ENCODE measurements at regions of chr2 and their contacts with region 1.

Region 1: DNA sequence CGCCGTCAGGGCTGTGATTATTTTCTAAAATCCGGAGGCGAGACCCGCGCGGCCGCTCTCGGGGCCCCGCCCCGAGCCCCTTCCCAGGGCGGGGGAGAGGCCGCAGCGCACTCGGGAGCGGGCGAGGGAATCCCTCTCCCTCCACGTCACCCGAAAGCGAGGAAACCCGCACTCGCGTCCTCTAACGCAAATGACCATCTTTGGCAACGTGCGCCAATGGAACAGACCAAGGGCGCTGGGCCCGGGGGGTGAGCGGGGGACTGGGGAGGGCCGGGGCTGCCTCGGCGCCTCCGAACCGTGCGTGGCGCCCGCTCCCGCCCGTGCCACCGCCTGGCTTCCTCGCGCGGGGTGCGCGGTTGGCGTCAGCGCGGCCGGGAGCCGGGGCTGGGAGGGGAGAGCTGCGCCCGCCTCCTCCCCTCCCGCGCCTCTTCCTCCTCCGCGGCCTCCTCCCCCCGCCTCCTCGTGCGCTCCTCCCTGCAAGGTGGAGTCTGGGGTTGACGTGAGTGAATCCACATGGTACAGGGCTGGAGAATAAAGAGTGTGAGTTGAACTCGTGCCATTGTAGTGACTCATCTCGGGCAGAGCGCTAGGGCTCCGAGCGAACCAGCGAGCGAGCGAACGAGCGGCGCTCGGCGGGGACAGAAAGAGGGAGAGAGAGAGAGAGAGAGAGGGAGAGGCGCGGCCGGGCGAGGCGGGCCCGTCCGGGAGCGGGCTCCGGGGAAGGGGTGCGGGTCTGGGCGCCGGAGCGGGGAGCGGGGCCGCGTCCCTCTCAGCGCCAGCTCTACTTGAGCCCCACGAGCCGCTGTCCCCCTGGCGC is at the start of gene FOSL2:
- DNase-seq: peak; percentile 95
- H3K4me3 Mint-ChIP-seq: peak within 1 kb of the TSS; percentile 91
- H3K27ac Mint-ChIP-seq: peak within 1 kb of the TSS; percentile 99
- H3K4me1 Mint-ChIP-seq: peaks cover 27% of the 10 kb centered on the region
- H3K27me3 Mint-ChIP-seq: no peaks in the 10 kb centered on the region
- total RNA-seq, gene FOSL2: 96.4 to 100 TPM

Region 2: GRCh38 chr2:27628767-27629709 is 763.5 kb before region 1 on chr2 and contains the starts of genes CCDC121 and GPN1:
- CTCF ChIA-PET with region 1: no interaction called
- POLR2A ChIA-PET with region 1: no interaction called
- DNase-seq: peak; percentile 98
- H3K4me3 Mint-ChIP-seq: no peak within 1 kb of the TSS
- H3K27ac Mint-ChIP-seq: no peak within 1 kb of the TSS
- H3K4me1 Mint-ChIP-seq: peaks cover 16% of the 10 kb centered on the region
- H3K27me3 Mint-ChIP-seq: no peaks in the 10 kb centered on the region
- total RNA-seq, gene CCDC121: 0.78 to 0.90 TPM
- total RNA-seq, gene GPN1: 45.0 to 45.8 TPM

Region 3: GRCh38 chr2:27890146-27890923 is 502.2 kb before region 1 on chr2 and contains the starts of genes BABAM2 and RBKS:
- CTCF ChIA-PET with region 1: interaction called, 4 read pairs
- POLR2A ChIA-PET with region 1: interaction called, 11 read pairs
- DNase-seq: peak; percentile 91
- H3K4me3 Mint-ChIP-seq: peak within 1 kb of the TSS; percentile 93
- H3K27ac Mint-ChIP-seq: peak within 1 kb of the TSS; percentile 98
- H3K4me1 Mint-ChIP-seq: peaks cover 62% of the 10 kb centered on the region
- H3K27me3 Mint-ChIP-seq: no peaks in the 10 kb centered on the region
- total RNA-seq, gene BABAM2: 51.4 to 56.6 TPM
- total RNA-seq, gene RBKS: 2.2 to 2.8 TPM

Region 4: DNA sequence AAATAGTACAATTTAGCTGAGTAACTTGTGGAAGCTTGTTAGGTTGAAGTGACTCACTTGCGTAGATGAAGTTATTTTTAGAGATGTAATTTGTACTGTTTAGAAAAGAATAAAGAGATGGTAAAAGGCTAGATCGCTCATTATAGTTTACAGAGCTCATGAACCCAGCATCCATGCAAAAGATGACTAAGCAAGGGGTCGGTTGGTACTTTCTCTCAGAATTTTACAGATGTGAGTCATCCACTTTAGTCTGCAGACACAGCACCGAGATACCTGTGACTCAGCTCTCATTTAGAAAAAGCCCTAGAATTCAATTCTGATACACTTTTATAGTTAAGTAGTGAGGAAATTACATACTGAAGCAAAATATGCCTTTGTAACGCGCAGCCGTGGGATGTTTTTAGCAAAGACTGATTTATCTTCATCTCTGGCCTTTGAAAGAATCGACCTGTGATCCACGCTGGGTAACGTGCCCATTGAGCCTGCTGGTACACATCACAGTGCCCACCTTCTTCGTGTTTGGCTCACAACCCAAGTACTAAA is 116.4 kb before region 1 on chr2:
- CTCF ChIA-PET with region 1: interaction called, 6 read pairs
- POLR2A ChIA-PET with region 1: interaction called, 34 read pairs
- DNase-seq: peak; percentile 42
- H3K4me3 Mint-ChIP-seq: no peak overlapping the region
- H3K27ac Mint-ChIP-seq: peak overlapping the region; percentile 31
- H3K4me1 Mint-ChIP-seq: peaks cover 59% of the 10 kb centered on the region
- H3K27me3 Mint-ChIP-seq: no peaks in the 10 kb centered on the region

Region 5: GRCh38 chr2:28356095-28356911 is 36.2 kb before region 1 on chr2:
- CTCF ChIA-PET with region 1: interaction called, 5 read pairs
- POLR2A ChIA-PET with region 1: interaction called, 114 read pairs
- DNase-seq: no peak
- H3K4me3 Mint-ChIP-seq: no peak overlapping the region
- H3K27ac Mint-ChIP-seq: no peak overlapping the region
- H3K4me1 Mint-ChIP-seq: peaks cover 50% of the 10 kb centered on the region
- H3K27me3 Mint-ChIP-seq: no peaks in the 10 kb centered on the region

Region 6: GRCh38 chr2:28377984-28378678 is 14.4 kb before region 1 on chr2:
- CTCF ChIA-PET with region 1: interaction called, 4 read pairs
- POLR2A ChIA-PET with region 1: interaction called, 82 read pairs
- DNase-seq: no peak
- H3K4me3 Mint-ChIP-seq: no peak overlapping the region
- H3K27ac Mint-ChIP-seq: peak overlapping the region; percentile 6
- H3K4me1 Mint-ChIP-seq: peaks cover 34% of the 10 kb centered on the region
- H3K27me3 Mint-ChIP-seq: peaks cover 7% of the 10 kb centered on the region

Region 7: GRCh38 chr2:28449488-28450395 is 57.2 kb after region 1 on chr2:
- CTCF ChIA-PET with region 1: interaction called, 3 read pairs
- POLR2A ChIA-PET with region 1: interaction called, 12 read pairs
- DNase-seq: peak; percentile 86
- H3K4me3 Mint-ChIP-seq: peak overlapping the region; percentile 21
- H3K27ac Mint-ChIP-seq: peak overlapping the region; percentile 86
- H3K4me1 Mint-ChIP-seq: peaks cover 73% of the 10 kb centered on the region
- H3K27me3 Mint-ChIP-seq: no peaks in the 10 kb centered on the region